Left ventricle myocardium inferior (tissue), 1 donor: ENCODE measurements at regions of chr3 and their contacts with region 1.

Region 1: GRCh38 chr3:134212906-134213665 is 37.6 kb downstream of the RYK start:
- DNase-seq: peak; percentile 75
- H3K4me3 ChIP-seq: no peak overlapping the region
- H3K27ac ChIP-seq: no peak overlapping the region
- H3K4me1 ChIP-seq: peaks cover 60% of the 10 kb centered on the region
- H3K27me3 ChIP-seq: no peaks in the 10 kb centered on the region
- CTCF ChIP-seq: peak; percentile 99

Region 2: GRCh38 chr3:134299185-134299887 is 86.2 kb after region 1 on chr3:
- intact Hi-C with region 1: loop called (anchors 5 kb)
- DNase-seq: no peak
- H3K4me3 ChIP-seq: no peak overlapping the region
- H3K27ac ChIP-seq: no peak overlapping the region
- H3K4me1 ChIP-seq: peaks cover 5% of the 10 kb centered on the region
- H3K27me3 ChIP-seq: no peaks in the 10 kb centered on the region
- CTCF ChIP-seq: peak; percentile 52